ENCODE measurements at regions of chr13 and their contacts with region 1.

Region 1: DNA sequence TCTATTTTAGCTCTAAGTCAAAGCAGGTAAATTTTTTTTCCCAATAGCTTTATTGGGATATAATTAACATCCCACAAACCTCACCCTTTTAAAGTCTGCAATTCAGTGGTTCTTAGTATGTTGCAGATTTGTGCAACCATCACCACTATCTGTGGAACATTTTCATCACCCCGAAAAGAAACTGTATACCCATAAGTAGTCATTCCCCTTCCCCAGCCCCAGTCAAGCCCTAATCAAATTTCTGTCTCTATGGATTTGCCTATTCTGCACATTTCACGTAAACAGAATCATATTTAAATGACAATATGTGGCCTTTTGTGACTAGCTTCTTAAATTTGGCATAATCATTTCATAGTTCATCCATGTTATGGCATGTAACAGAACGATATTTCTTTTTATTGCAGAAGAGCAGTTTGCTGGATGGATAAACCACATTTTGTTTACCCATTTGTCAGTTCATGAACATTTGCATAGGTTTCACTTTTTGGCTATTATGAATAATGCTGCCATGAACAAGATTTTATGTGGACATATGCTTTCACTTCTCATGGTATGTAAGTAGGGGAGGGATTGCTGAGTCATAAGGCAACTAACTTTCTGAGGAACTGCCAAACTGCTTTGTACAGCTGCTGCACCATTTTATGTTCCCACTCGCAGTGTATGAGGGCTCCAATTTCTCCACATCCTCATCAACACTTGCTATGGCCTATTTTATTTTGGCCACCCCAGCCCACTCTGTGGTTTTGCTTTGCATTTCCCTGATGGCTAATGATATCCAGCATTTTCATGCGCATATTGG is 10.9 kb downstream of the SLC46A3 start:
- DNase-seq: peak; percentile 75
- H3K4me3 Mint-ChIP-seq: no peak overlapping the region
- H3K27ac Mint-ChIP-seq: peak overlapping the region; percentile 0
- H3K4me1 Mint-ChIP-seq: peaks cover 9% of the 10 kb centered on the region
- H3K27me3 Mint-ChIP-seq: no peaks in the 10 kb centered on the region

Region 2: GRCh38 chr13:28611654-28612131 is 96.1 kb before region 1 on chr13:
- intact Hi-C with region 1: no loop called
- DNase-seq: peak; percentile 81
- H3K4me3 Mint-ChIP-seq: peak overlapping the region; percentile 53
- H3K27ac Mint-ChIP-seq: peak overlapping the region; percentile 68
- H3K4me1 Mint-ChIP-seq: peaks cover 28% of the 10 kb centered on the region
- H3K27me3 Mint-ChIP-seq: no peaks in the 10 kb centered on the region

Region 3: DNA sequence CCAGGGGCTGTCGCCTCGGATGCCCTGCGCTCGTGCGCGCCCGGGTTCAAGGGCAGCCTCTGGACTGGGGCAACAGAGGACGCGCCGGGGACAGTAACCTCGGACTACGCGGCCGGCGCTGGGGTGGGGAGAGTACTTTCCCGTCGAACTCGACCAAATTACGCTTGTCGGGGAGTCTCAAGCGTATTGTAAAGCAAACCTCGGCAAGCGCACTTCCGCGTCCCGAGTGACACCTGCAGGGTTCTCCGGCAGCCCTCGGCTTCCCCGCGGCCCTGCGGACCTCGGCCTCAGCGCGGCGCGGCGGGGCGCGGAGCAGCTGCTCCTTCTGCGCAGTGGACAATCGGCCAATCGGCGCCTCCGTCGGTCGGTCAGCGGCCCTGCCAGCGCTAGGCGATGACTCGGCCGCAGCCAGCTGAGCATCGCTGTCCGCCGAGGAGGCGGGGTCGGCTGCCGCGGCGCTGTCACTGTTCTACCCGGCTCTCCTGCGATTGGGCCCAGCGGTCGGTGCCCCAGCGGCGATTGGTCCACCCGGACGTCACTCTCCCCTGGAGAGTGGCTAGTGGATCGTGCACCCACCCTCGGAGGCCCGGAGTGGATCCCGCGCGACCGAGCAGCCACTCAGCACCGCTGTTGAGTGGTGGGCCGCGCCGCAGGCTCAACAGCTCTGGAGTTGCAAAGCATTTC is 10.9 kb after region 1 on chr13 and contains the start of gene SLC46A3:
- intact Hi-C with region 1: loop called (anchors 1 kb)
- DNase-seq: peak; percentile 99
- H3K4me3 Mint-ChIP-seq: peak within 1 kb of the TSS; percentile 97
- H3K27ac Mint-ChIP-seq: peak within 1 kb of the TSS; percentile 86
- H3K4me1 Mint-ChIP-seq: peaks cover 23% of the 10 kb centered on the region
- H3K27me3 Mint-ChIP-seq: peaks cover 5% of the 10 kb centered on the region
- total RNA-seq, gene SLC46A3: 3.1 and 3.3 TPM in 2 replicates

Region 4: GRCh38 chr13:29162638-29163235 is 454.9 kb after region 1 on chr13:
- intact Hi-C with region 1: no loop called
- DNase-seq: no peak
- H3K4me3 Mint-ChIP-seq: no peak overlapping the region
- H3K27ac Mint-ChIP-seq: no peak overlapping the region
- H3K4me1 Mint-ChIP-seq: no peaks in the 10 kb centered on the region
- H3K27me3 Mint-ChIP-seq: no peaks in the 10 kb centered on the region